ENCODE measurements at regions of chr12 and their contacts with region 1.

Region 1: DNA sequence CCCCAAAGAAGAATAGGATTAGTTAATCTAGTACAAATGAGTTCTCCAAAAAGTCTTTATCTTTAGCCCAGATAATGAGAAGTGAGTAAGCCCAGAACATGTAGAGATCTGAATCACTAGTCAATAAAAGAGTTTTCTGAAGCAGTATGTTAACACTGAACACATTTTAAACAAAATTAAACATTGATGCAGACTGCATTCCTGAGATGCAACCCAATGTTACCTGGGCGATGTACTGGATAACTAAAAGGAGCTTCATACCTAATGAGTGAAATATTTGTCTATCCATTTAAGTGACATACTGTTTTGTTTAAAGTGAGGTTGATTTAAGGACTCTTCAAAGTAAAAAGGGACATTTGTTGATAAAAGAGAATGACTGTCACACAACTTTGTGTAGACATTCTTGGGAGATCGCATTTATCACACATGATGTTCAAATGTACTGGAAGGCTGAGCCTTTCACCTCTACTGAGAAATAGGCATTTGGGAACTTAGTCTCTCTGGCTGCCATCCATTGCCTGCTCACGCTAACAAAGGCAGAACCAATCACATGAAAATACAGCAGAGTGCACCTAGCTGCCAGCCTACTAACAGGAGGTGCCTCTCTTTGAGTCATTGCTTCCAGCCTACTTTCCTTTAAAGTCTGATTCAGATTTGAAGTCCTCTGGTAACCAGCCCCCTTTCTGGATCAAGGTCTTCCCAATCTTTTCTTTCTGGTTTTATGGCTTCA is 287.7 kb downstream of the BTG1 start:
- DNase-seq: no peak
- ATAC-seq: no peak
- H3K4me3 ChIP-seq: no peak overlapping the region
- H3K4me3 Mint-ChIP-seq: no peak overlapping the region
- H3K27ac ChIP-seq: no peak overlapping the region
- H3K27ac Mint-ChIP-seq: peak overlapping the region in 5 of 9 donors; percentile 14 to 69 (median 39)
- H3K4me1 ChIP-seq: peaks cover 0 to 9% of the 10 kb centered on the region in 2 donors
- H3K4me1 Mint-ChIP-seq: peaks cover 6 to 74% (median 36%) of the 10 kb centered on the region in 7 donors
- H3K27me3 ChIP-seq: no peaks in the 10 kb centered on the region
- H3K27me3 Mint-ChIP-seq: no peaks in the 10 kb centered on the region

Region 2: DNA sequence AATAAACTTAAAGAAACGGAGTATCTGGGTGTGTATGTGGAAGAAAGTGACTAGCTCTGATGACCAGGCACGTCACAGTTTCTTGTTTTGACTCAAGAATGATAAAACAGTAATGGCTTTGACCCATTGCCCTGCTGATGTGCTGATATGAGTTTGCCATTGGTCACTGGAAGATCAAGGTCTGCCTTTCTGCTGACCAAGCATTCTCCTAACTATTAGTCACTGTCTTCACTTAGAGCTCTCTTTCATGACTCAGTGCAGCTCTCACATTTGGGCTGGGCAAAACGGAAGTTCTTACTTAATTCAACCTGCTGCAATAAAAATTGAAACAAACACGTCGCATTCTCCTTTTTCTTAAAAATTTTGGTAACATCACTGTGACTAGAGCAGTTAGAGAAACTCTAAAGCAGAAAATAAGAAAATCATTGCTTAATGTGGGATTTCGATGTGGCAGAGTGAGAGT is 79.0 kb before region 1 on chr12:
- CTCF ChIA-PET with region 1: no interaction called
- POLR2A ChIA-PET with region 1: interaction called, 3 read pairs
- intact Hi-C with region 1: loop called in 1 of 2 experiments (anchors 5 kb)
- DNase-seq: peak in 8 of 9 donors; percentile 14 to 47 (median 27)
- ATAC-seq: peak; percentile 75
- H3K4me3 ChIP-seq: peak overlapping the region; percentile 29
- H3K4me3 Mint-ChIP-seq: peak overlapping the region; percentile 72 to 92 (median 83)
- H3K27ac ChIP-seq: peak overlapping the region; percentile 67
- H3K27ac Mint-ChIP-seq: peak overlapping the region; percentile 91 to 97 (median 93)
- H3K4me1 ChIP-seq: peaks cover 10 to 35% of the 10 kb centered on the region in 2 donors
- H3K4me1 Mint-ChIP-seq: peaks cover 19 to 70% (median 50%) of the 10 kb centered on the region in 7 donors
- H3K27me3 ChIP-seq: no peaks in the 10 kb centered on the region
- H3K27me3 Mint-ChIP-seq: peaks cover 0 to 4% (median 3%) of the 10 kb centered on the region in 5 donors

Region 3: DNA sequence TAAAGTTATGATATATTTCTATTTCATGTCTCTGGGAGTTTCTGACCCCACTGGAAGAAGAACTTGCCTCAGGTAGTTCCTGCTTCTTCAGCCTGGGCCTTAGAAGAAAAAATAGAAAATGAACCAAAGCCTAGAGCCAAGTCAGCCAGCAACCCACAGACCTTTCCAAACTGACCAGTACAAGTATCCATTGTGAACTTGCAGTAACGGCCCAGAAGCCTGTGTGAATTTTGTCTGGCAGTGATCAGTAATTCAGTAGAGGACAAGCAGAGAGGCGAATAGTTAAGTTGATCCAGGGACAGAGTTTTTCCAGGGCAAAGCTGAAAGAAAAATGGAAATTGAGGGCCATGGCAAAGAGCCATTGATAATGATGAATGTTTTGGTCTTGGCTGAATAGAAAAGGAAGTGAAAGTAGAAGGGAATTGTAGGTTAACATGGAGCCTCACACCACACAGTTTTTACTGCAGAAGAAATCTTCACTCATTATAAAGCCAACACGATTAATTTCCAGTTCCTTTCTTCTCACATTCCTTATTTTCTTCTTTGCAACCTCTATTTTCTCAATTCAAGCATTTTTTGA is 24.1 kb before region 1 on chr12:
- CTCF ChIA-PET with region 1: no interaction called
- POLR2A ChIA-PET with region 1: no interaction called
- intact Hi-C with region 1: loop called in 1 of 2 experiments (anchors 2 kb)
- DNase-seq: no peak
- ATAC-seq: no peak
- H3K4me3 ChIP-seq: no peak overlapping the region
- H3K4me3 Mint-ChIP-seq: no peak overlapping the region
- H3K27ac ChIP-seq: no peak overlapping the region
- H3K27ac Mint-ChIP-seq: peak overlapping the region in 2 of 9 donors; percentile 44 to 59
- H3K4me1 ChIP-seq: no peaks in the 10 kb centered on the region
- H3K4me1 Mint-ChIP-seq: peaks cover 4 to 36% (median 17%) of the 10 kb centered on the region in 7 donors
- H3K27me3 ChIP-seq: no peaks in the 10 kb centered on the region
- H3K27me3 Mint-ChIP-seq: no peaks in the 10 kb centered on the region

Region 4: GRCh38 chr12:91846466-91847055 is 11.4 kb before region 1 on chr12:
- CTCF ChIA-PET with region 1: no interaction called
- POLR2A ChIA-PET with region 1: interaction called, 6 read pairs
- intact Hi-C with region 1: loop called in 1 of 2 experiments (anchors 1 kb)
- DNase-seq: no peak
- ATAC-seq: no peak
- H3K4me3 ChIP-seq: no peak overlapping the region
- H3K4me3 Mint-ChIP-seq: peak overlapping the region in 1 of 10 donors; percentile 29
- H3K27ac ChIP-seq: no peak overlapping the region
- H3K27ac Mint-ChIP-seq: peak overlapping the region in 1 of 9 donors; percentile 82
- H3K4me1 ChIP-seq: peaks cover 0 to 4% of the 10 kb centered on the region in 2 donors
- H3K4me1 Mint-ChIP-seq: peaks cover 2 to 24% (median 19%) of the 10 kb centered on the region in 7 donors
- H3K27me3 ChIP-seq: no peaks in the 10 kb centered on the region
- H3K27me3 Mint-ChIP-seq: peaks cover 0 to 4% (median 0%) of the 10 kb centered on the region in 5 donors

Region 5: DNA sequence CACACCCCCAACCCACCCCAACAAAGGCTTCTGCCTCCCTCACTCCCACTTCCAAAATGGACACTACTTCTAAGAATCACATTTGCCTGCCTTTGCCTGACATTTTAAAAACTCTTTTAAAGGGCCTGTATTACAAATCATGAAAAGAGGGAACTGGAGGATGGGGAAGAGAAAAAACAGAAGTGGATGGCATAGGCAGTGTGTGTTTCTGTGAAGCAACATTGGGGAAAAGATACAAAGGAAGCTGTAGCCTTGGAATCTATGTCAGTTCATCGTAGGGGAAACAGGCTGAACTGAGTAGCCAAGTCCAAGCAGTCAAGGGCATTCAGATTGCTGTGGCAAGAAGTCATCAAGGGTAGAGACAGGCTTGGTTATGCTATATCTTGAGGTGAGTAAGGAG is 13.8 kb after region 1 on chr12:
- CTCF ChIA-PET with region 1: interaction called, 3 read pairs
- POLR2A ChIA-PET with region 1: interaction called, 90 read pairs
- intact Hi-C with region 1: loop called in 1 of 2 experiments (anchors 1 kb)
- DNase-seq: no peak
- ATAC-seq: peak; percentile 68
- H3K4me3 ChIP-seq: no peak overlapping the region
- H3K4me3 Mint-ChIP-seq: peak overlapping the region in 6 of 10 donors; percentile 10 to 66 (median 57)
- H3K27ac ChIP-seq: peak overlapping the region; percentile 68
- H3K27ac Mint-ChIP-seq: peak overlapping the region in 8 of 9 donors; percentile 86 to 96 (median 91)
- H3K4me1 ChIP-seq: peaks cover 46 to 53% of the 10 kb centered on the region in 2 donors
- H3K4me1 Mint-ChIP-seq: peaks cover 31 to 79% (median 67%) of the 10 kb centered on the region in 7 donors
- H3K27me3 ChIP-seq: no peaks in the 10 kb centered on the region
- H3K27me3 Mint-ChIP-seq: no peaks in the 10 kb centered on the region